ENCODE measurements at regions of chr3 and their contacts with region 1.

Region 1: DNA sequence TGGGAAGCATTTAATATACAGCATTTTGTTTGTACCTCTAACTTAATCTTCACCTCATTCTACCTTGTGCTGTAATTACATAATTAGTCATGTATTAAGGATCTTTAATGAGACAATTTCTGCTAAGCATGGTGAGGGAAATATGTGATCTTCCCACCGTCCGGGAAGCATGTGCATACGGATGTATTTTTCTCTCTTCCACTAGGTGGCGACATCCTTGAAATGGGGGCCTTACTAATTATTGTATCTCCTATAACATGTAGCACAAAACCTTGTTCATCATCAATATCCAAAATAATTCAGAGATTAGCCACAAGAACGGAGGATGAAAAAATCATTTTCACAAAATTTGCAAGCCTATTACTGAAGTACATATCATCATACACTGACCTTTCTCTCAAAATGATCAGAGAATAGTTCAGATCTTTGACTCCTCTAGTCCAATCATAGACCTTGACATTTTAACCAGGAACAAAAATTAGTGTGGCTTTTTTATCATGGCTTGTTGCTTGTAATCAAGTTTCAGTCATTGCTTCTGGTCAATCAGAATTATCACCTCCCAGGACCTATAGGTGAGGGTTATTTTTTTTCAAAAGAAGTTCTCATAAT is 148.9 kb upstream of the GBE1 start:
- DNase-seq: peak in 4 of 5 donors; percentile 1 to 23 (median 6)
- H3K4me3 ChIP-seq: no peak overlapping the region
- H3K4me3 Mint-ChIP-seq: no peak overlapping the region
- H3K27ac ChIP-seq: no peak overlapping the region
- H3K27ac Mint-ChIP-seq: no peak overlapping the region
- H3K4me1 ChIP-seq: no peaks in the 10 kb centered on the region
- H3K4me1 Mint-ChIP-seq: peaks cover 0 to 3% (median under 1%) of the 10 kb centered on the region in 4 donors
- H3K27me3 ChIP-seq: no peaks in the 10 kb centered on the region
- H3K27me3 Mint-ChIP-seq: peaks cover 4 to 6% of the 10 kb centered on the region in 2 donors

Region 2: GRCh38 chr3:81352867-81353545 is 557.3 kb before region 1 on chr3:
- CTCF ChIA-PET with region 1: no interaction called
- POLR2A ChIA-PET with region 1: no interaction called
- intact Hi-C with region 1: no loop called
- DNase-seq: no peak
- H3K4me3 ChIP-seq: no peak overlapping the region
- H3K4me3 Mint-ChIP-seq: no peak overlapping the region
- H3K27ac ChIP-seq: no peak overlapping the region
- H3K27ac Mint-ChIP-seq: no peak overlapping the region
- H3K4me1 ChIP-seq: no peaks in the 10 kb centered on the region
- H3K4me1 Mint-ChIP-seq: no peaks in the 10 kb centered on the region
- H3K27me3 ChIP-seq: no peaks in the 10 kb centered on the region
- H3K27me3 Mint-ChIP-seq: no peaks in the 10 kb centered on the region

Region 3: DNA sequence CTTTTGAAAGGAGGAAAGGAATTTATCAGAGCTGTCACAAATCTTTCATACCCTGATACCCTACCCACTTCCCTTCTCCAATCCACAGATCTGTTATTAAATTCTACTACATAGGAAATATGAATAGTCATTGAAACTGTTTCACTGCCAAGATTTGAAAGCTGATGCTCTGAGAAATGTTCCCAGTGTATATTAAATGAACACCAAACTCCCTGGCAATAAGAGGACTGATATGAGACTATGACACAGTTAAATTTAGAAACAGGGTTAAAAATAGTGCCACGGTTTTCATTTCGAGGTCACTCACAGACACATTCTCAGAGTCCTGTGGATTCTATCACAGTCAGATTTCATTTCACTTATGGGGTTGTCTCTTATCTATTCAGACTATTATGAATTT is 121.7 kb before region 1 on chr3:
- CTCF ChIA-PET with region 1: no interaction called
- POLR2A ChIA-PET with region 1: no interaction called
- intact Hi-C with region 1: no loop called
- DNase-seq: no peak
- H3K4me3 ChIP-seq: no peak overlapping the region
- H3K4me3 Mint-ChIP-seq: no peak overlapping the region
- H3K27ac ChIP-seq: no peak overlapping the region
- H3K27ac Mint-ChIP-seq: no peak overlapping the region
- H3K4me1 ChIP-seq: no peaks in the 10 kb centered on the region
- H3K4me1 Mint-ChIP-seq: no peaks in the 10 kb centered on the region
- H3K27me3 ChIP-seq: no peaks in the 10 kb centered on the region
- H3K27me3 Mint-ChIP-seq: peaks cover 1 to 5% of the 10 kb centered on the region in 2 donors

Region 4: GRCh38 chr3:81894598-81894997 is 15.8 kb before region 1 on chr3:
- CTCF ChIA-PET with region 1: interaction called, 13 read pairs
- POLR2A ChIA-PET with region 1: no interaction called
- intact Hi-C with region 1: no loop called
- DNase-seq: no peak
- H3K4me3 ChIP-seq: no peak overlapping the region
- H3K4me3 Mint-ChIP-seq: no peak overlapping the region
- H3K27ac ChIP-seq: no peak overlapping the region
- H3K27ac Mint-ChIP-seq: no peak overlapping the region
- H3K4me1 ChIP-seq: no peaks in the 10 kb centered on the region
- H3K4me1 Mint-ChIP-seq: no peaks in the 10 kb centered on the region
- H3K27me3 ChIP-seq: no peaks in the 10 kb centered on the region
- H3K27me3 Mint-ChIP-seq: peaks cover 0 to 1% of the 10 kb centered on the region in 2 donors

Region 5: GRCh38 chr3:81920816-81921215 is 10.5 kb after region 1 on chr3:
- CTCF ChIA-PET with region 1: interaction called, 36 read pairs
- POLR2A ChIA-PET with region 1: no interaction called
- intact Hi-C with region 1: no loop called
- DNase-seq: no peak
- H3K4me3 ChIP-seq: no peak overlapping the region
- H3K4me3 Mint-ChIP-seq: no peak overlapping the region
- H3K27ac ChIP-seq: no peak overlapping the region
- H3K27ac Mint-ChIP-seq: no peak overlapping the region
- H3K4me1 ChIP-seq: no peaks in the 10 kb centered on the region
- H3K4me1 Mint-ChIP-seq: no peaks in the 10 kb centered on the region
- H3K27me3 ChIP-seq: no peaks in the 10 kb centered on the region
- H3K27me3 Mint-ChIP-seq: peaks cover 2 to 5% of the 10 kb centered on the region in 2 donors

Measured in CD4-positive, alpha-beta memory T cell (primary cell).